ENCODE measurements at regions of chr12 and their contacts with region 1.

Region 1: GRCh38 chr12:32062881-32063280 is 43.8 kb upstream of the BICD1 start:
- DNase-seq: no peak
- ATAC-seq: no peak
- H3K4me3 Mint-ChIP-seq: no peak overlapping the region
- H3K27ac Mint-ChIP-seq: no peak overlapping the region
- H3K4me1 Mint-ChIP-seq: peaks cover 9% of the 10 kb centered on the region
- H3K27me3 Mint-ChIP-seq: peaks cover 1% of the 10 kb centered on the region
- CTCF ChIP-seq: no peak

Region 2: GRCh38 chr12:31651893-31652521 is 410.9 kb before region 1 on chr12:
- CTCF ChIA-PET with region 1: interaction called, 12 read pairs
- POLR2A ChIA-PET with region 1: no interaction called
- intact Hi-C with region 1: loop called (anchors 10 kb)
- DNase-seq: no peak
- ATAC-seq: no peak
- H3K4me3 Mint-ChIP-seq: peak overlapping the region; percentile 24
- H3K27ac Mint-ChIP-seq: no peak overlapping the region
- H3K4me1 Mint-ChIP-seq: peaks cover 12% of the 10 kb centered on the region
- H3K27me3 Mint-ChIP-seq: no peaks in the 10 kb centered on the region
- CTCF ChIP-seq: no peak

Region 3: GRCh38 chr12:31896514-31897039 is 166.3 kb before region 1 on chr12:
- CTCF ChIA-PET with region 1: no interaction called
- POLR2A ChIA-PET with region 1: no interaction called
- intact Hi-C with region 1: no loop called
- DNase-seq: peak; percentile 94
- ATAC-seq: peak; percentile 94
- H3K4me3 Mint-ChIP-seq: peak overlapping the region; percentile 43
- H3K27ac Mint-ChIP-seq: peak overlapping the region; percentile 98
- H3K4me1 Mint-ChIP-seq: peaks cover 49% of the 10 kb centered on the region
- H3K27me3 Mint-ChIP-seq: no peaks in the 10 kb centered on the region
- CTCF ChIP-seq: no peak

Region 4: DNA sequence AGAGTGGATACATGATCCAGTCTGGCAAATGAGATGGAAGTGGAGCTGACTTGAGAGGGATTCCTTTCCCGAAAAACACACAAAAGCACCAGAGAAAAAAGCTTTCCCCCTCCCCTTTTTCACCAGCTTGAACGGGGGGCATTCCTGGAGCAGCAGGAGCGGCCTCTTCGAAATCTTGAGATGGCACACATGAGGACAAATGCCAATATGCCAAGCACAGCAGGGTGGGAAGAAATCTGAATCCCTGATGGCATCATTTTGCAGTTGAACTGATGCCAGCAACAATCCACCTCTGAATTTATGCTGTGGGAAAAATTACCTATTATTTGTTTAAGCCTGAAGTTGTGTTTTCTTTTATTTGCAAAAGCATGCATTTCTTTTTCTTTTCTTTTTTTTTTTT is 14.1 kb after region 1 on chr12:
- CTCF ChIA-PET with region 1: interaction called, 14 read pairs
- POLR2A ChIA-PET with region 1: no interaction called
- intact Hi-C with region 1: no loop called
- DNase-seq: no peak
- ATAC-seq: no peak
- H3K4me3 Mint-ChIP-seq: no peak overlapping the region
- H3K27ac Mint-ChIP-seq: no peak overlapping the region
- H3K4me1 Mint-ChIP-seq: no peaks in the 10 kb centered on the region
- H3K27me3 Mint-ChIP-seq: no peaks in the 10 kb centered on the region
- CTCF ChIP-seq: no peak

Region 5: GRCh38 chr12:32302218-32303173 is 239.6 kb after region 1 on chr12:
- CTCF ChIA-PET with region 1: interaction called, 17 read pairs
- POLR2A ChIA-PET with region 1: no interaction called
- intact Hi-C with region 1: loop called (anchors 5 kb)
- DNase-seq: peak; percentile 34
- ATAC-seq: peak; percentile 82
- H3K4me3 Mint-ChIP-seq: no peak overlapping the region
- H3K27ac Mint-ChIP-seq: no peak overlapping the region
- H3K4me1 Mint-ChIP-seq: no peaks in the 10 kb centered on the region
- H3K27me3 Mint-ChIP-seq: no peaks in the 10 kb centered on the region
- CTCF ChIP-seq: peak; percentile 30

Region 6: DNA sequence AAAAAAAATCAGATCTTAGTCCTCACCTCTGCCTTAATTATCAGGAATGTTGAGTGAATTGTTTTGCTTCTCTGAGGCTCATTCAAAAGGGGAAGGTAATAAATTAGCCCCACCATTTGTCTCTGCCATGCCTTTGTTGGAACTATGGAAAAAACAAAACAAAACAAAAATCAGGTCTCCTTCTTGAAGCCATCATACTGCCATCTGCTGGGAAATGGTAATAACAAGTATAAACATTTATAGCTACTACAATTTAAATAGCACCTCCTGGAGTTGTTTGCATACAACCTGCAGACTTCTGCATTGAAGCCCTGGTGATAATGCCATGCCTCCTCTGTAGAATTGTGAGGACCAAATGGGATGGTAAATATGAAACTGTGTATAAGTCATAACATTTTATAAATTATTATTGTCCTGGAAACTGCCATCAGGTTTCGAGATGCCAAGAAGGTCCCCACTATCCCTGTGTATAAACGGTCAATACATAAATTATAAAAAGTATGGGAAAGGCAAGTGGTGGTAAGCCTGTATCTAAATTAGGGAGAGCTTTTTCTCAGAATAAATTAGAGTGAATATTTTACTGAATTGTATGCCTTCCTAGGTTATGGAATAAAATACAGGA is 249.3 kb after region 1 on chr12:
- CTCF ChIA-PET with region 1: interaction called, 17 read pairs
- POLR2A ChIA-PET with region 1: no interaction called
- intact Hi-C with region 1: no loop called
- DNase-seq: no peak
- ATAC-seq: no peak
- H3K4me3 Mint-ChIP-seq: no peak overlapping the region
- H3K27ac Mint-ChIP-seq: no peak overlapping the region
- H3K4me1 Mint-ChIP-seq: no peaks in the 10 kb centered on the region
- H3K27me3 Mint-ChIP-seq: no peaks in the 10 kb centered on the region
- CTCF ChIP-seq: peak; percentile 72

Measured in activated CD8-positive, alpha-beta T cell treated with anti-CD3 and anti-CD28 coated beads for 36 hours (primary cell).